ENCODE measurements at regions of chrX and their contacts with region 1.

Region 1: DNA sequence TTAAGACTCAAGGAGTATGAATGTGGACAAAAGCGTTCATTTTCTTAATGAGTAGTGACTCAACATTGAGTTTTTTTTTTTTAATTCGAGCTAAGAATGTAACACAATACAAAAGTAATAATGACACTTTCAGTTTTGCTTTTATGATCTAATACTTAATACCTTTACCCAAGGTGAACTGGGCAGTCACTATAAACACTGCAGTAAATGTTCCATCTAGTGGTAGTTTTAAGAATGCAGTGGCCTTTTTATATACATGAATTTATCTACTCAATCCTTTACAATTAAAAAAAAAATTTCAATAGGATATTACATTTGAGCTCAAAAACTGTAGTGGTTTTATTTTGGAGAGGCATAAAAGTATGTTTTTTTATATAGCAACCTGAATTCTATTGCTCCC is 33.9 kb downstream of the PDK3 start:
- DNase-seq: no peak
- ATAC-seq: peak in 2 of 4 donors; percentile 49 to 72
- H3K4me3 ChIP-seq: no peak overlapping the region
- H3K27ac ChIP-seq: no peak overlapping the region
- H3K4me1 ChIP-seq: no peaks in the 10 kb centered on the region
- H3K27me3 ChIP-seq: no peaks in the 10 kb centered on the region
- CTCF ChIP-seq: peak; percentile 64

Region 2: GRCh38 chrX:24395775-24396174 is 103.2 kb before region 1 on chrX:
- intact Hi-C with region 1: loop called (anchors 1 to 5 kb)
- DNase-seq: no peak
- ATAC-seq: peak; percentile 84 to 92 (median 88)
- H3K4me3 ChIP-seq: no peak overlapping the region
- H3K27ac ChIP-seq: no peak overlapping the region
- H3K4me1 ChIP-seq: no peaks in the 10 kb centered on the region
- H3K27me3 ChIP-seq: peaks cover 0 to 2% (median 0%) of the 10 kb centered on the region in 3 donors
- CTCF ChIP-seq: peak; percentile 75

Region 3: GRCh38 chrX:24464498-24464835 is 34.5 kb before region 1 on chrX:
- intact Hi-C with region 1: loop called in 1 of 2 experiments (anchors 5 kb)
- DNase-seq: no peak
- ATAC-seq: no peak
- H3K4me3 ChIP-seq: peak overlapping the region; percentile 76
- H3K27ac ChIP-seq: peak overlapping the region; percentile 68
- H3K4me1 ChIP-seq: no peaks in the 10 kb centered on the region
- H3K27me3 ChIP-seq: no peaks in the 10 kb centered on the region
- CTCF ChIP-seq: no peak

Measured in psoas muscle (tissue), 8 donors.